GM12878 (cell line): ENCODE measurements at regions of chr11 and their contacts with region 1.

Region 1: GRCh38 chr11:72831513-72832300 is 17.5 kb downstream of the ATG16L2 start:
- DNase-seq: no peak
- ATAC-seq: peak; percentile 83
- H3K4me3 ChIP-seq: no peak overlapping the region
- H3K27ac ChIP-seq: no peak overlapping the region
- H3K4me1 ChIP-seq: peaks cover 8% of the 10 kb centered on the region
- H3K27me3 ChIP-seq: no peaks in the 10 kb centered on the region
- CTCF ChIP-seq: peak; percentile 77 to 85 (median 85); a peak in 5 of 6 replicates
- EP300 ChIP-seq: no peak
- POLR2A ChIP-seq: peak; percentile 69
- RAD21 ChIP-seq: peak; percentile 81

Region 2: DNA sequence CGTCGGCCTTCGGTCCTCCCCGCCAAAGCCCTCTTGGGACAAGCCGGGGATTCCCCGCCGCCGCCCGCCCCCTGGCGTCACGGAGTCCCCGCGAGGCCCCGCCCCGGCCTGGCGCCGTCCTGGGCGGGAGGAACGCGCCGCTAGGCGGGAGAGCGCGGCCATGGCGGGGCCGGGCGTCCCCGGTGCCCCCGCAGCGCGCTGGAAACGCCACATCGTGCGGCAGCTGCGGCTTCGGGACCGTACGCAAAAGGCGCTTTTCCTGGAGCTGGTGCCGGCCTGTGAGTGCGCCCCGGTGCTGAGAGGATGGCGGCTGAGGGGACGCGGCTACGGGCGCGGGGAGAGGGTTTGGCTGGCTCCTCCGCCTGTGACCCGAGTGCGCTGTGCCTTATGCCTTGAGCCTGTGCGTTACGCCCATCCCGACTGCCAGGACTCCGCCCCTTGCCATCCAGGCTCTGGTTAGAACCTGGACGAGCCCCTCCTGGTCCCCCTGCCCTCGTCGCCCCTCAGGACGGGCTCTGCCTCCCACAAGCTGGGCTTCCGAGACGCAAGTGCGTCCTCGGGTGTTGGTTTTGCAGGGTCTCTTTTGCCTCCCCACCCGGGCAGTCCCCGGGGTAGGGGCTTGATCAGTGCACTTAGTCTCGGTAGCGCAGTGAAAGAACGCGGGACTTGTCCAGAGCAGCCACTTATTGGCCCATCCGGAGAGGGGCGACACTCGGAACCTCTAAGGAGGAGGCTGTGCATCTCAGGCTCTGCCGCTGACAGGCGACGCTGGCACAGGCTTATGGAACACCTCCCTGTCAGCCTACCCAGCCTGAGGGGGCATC is 17.2 kb before region 1 on chr11 and contains the start of gene ATG16L2:
- CTCF ChIA-PET with region 1: interaction called, 6 read pairs
- POLR2A ChIA-PET with region 1: interaction called, 14 read pairs
- RAD21 ChIA-PET with region 1: interaction called, 6 read pairs
- SMC1A ChIA-PET with region 1: interaction called, 7 read pairs
- in situ Hi-C with region 1: no loop called
- intact Hi-C with region 1: no loop called
- DNase-seq: no peak
- ATAC-seq: peak; percentile 74
- H3K4me3 ChIP-seq: peak within 1 kb of the TSS; percentile 89
- H3K27ac ChIP-seq: peak within 1 kb of the TSS; percentile 98
- H3K4me1 ChIP-seq: peaks cover 7% of the 10 kb centered on the region; the same call in 1 of the 2 replicates
- H3K27me3 ChIP-seq: no peaks in the 10 kb centered on the region
- CTCF ChIP-seq: peak in 2 of 3 experiments; percentile 15 to 19; a peak in 1 of 6 replicates
- EP300 ChIP-seq: 0 out of 4 replicates have a peak, but pooled peaks of 1 of the 2 experiments have one; percentile 3
- POLR2A ChIP-seq: peak; percentile 81
- RAD21 ChIP-seq: 0 out of 2 replicates have a peak, but pooled peaks have one; percentile 20
- polyA plus RNA-seq, gene ATG16L2: 1.9 to 5.3 TPM

Region 3: DNA sequence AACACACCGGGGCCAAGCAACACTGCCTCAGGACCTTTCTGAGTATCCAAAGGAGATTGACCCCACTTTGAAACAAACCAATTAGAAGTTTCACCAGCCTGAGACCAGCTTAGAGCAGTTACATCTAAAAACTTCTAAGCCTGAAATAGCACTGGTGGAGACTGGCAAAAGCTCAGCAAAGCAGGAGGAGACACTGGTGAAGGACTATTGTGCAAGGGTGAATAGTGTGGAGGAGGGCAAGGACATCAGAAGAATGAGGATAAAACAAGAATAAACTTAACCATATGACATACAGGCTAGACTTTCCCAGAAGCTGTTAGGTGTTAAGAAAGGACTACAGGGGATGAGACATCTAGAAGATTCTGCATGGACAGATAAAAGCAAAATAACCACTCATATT is 158.0 kb after region 1 on chr11:
- CTCF ChIA-PET with region 1: no interaction called
- POLR2A ChIA-PET with region 1: no interaction called
- RAD21 ChIA-PET with region 1: no interaction called
- SMC1A ChIA-PET with region 1: no interaction called
- in situ Hi-C with region 1: no loop called
- intact Hi-C with region 1: no loop called
- DNase-seq: no peak
- ATAC-seq: no peak
- H3K4me3 ChIP-seq: no peak overlapping the region
- H3K27ac ChIP-seq: no peak overlapping the region
- H3K4me1 ChIP-seq: no peaks in the 10 kb centered on the region
- H3K27me3 ChIP-seq: no peaks in the 10 kb centered on the region
- CTCF ChIP-seq: no peak
- EP300 ChIP-seq: no peak
- POLR2A ChIP-seq: no peak
- RAD21 ChIP-seq: no peak

Region 4: GRCh38 chr11:73242251-73243079 is 410.8 kb after region 1 on chr11:
- CTCF ChIA-PET with region 1: interaction called, 4 read pairs
- POLR2A ChIA-PET with region 1: no interaction called
- RAD21 ChIA-PET with region 1: interaction called, 4 read pairs
- SMC1A ChIA-PET with region 1: interaction called, 5 read pairs
- in situ Hi-C with region 1: loop called (anchors 5 kb)
- intact Hi-C with region 1: no loop called
- DNase-seq: peak; percentile 48
- ATAC-seq: peak; percentile 97
- H3K4me3 ChIP-seq: no peak overlapping the region
- H3K27ac ChIP-seq: peak overlapping the region; percentile 46
- H3K4me1 ChIP-seq: peaks cover 18% of the 10 kb centered on the region
- H3K27me3 ChIP-seq: no peaks in the 10 kb centered on the region
- CTCF ChIP-seq: peak; percentile 73 to 90 (median 80)
- EP300 ChIP-seq: no peak
- POLR2A ChIP-seq: peak; percentile 53
- RAD21 ChIP-seq: peak; percentile 89